ENCODE measurements at regions of chr19 and their contacts with region 1.

Region 1: DNA sequence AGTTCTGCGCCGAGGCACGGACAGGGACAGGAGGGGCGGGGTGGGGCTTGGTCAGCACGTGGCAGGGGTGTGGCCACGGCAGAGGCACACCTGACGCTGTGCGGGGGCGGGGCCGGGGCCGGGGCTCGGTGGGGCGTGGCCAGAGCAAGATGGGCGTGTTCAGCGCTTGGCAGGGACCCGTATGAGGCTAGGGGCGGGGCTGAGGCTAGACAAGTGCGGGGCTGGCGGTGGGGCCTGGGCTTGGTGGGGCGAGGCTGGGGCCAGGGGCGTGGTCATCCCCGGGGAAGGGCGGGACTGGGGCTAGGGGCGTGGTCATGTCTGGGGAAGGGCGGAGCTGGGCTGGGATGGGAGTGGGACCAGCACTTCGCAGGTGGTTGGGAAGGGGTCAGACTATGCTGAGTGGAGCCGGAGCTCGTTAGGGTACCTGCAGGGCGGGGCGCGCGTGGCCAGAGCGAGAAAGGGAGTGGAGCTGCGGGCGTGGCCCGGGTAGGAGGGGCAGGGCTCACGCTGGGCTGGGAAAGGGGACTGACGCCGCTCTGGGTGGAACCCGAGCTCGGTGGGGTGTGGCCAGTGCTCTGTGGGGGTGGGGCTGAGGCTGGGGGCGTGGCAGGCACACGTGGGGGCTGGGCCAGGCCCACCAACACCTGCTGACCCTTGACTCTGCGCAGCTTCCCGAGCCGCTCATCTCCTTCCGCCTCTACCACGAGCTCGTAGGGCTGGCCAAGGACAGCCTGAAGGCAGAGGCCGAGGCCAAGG is 12.8 kb downstream of the POLR2E start:
- DNase-seq: peak; percentile 66 to 93 (median 85)
- ATAC-seq: peak; percentile 92
- H3K4me3 ChIP-seq: no peak overlapping the region
- H3K4me3 Mint-ChIP-seq: peak overlapping the region in 9 of 10 donors; percentile 34 to 97 (median 75)
- H3K27ac ChIP-seq: peak overlapping the region; percentile 66
- H3K27ac Mint-ChIP-seq: peak overlapping the region in 8 of 9 donors; percentile 54 to 100 (median 90)
- H3K4me1 ChIP-seq: peaks cover 40 to 44% of the 10 kb centered on the region in 2 donors
- H3K4me1 Mint-ChIP-seq: peaks cover 17 to 59% (median 46%) of the 10 kb centered on the region in 7 donors
- H3K27me3 ChIP-seq: no peaks in the 10 kb centered on the region
- H3K27me3 Mint-ChIP-seq: no peaks in the 10 kb centered on the region

Region 2: DNA sequence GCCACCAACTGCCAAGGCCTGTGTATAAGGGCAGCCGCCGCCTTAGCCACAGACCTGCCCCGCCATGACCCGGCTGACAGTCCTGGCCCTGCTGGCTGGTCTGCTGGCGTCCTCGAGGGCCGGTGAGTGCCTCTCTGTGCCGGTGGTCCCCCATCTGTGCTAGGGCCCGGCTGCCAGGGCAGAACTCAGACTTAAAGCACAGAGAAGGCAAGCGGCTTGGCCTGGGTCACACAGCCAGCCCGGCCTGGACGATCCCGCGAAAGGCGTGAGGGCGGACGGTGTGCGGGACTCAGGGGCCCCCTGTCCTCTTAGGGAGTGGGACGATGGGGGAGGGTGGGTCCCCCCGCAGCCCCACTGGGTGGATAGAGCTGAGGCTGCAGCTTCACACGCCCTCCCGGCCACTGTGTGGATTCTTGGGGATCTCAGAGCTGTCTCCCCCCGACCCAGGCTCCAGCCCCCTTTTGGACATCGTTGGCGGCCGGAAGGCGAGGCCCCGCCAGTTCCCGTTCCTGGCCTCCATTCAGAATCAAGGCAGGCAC is 254.5 kb before region 1 on chr19 and contains the start of gene AZU1:
- CTCF ChIA-PET with region 1: no interaction called
- POLR2A ChIA-PET with region 1: no interaction called
- intact Hi-C with region 1: no loop called
- DNase-seq: no peak
- ATAC-seq: peak; percentile 60
- H3K4me3 ChIP-seq: no peak within 1 kb of the TSS
- H3K4me3 Mint-ChIP-seq: no peak within 1 kb of the TSS
- H3K27ac ChIP-seq: no peak within 1 kb of the TSS
- H3K27ac Mint-ChIP-seq: no peak within 1 kb of the TSS
- H3K4me1 ChIP-seq: no peaks in the 10 kb centered on the region
- H3K4me1 Mint-ChIP-seq: peaks cover 0 to 7% (median 0%) of the 10 kb centered on the region in 7 donors
- H3K27me3 ChIP-seq: no peaks in the 10 kb centered on the region
- H3K27me3 Mint-ChIP-seq: peaks cover 8 to 23% (median 11%) of the 10 kb centered on the region in 5 donors
- total RNA-seq, gene AZU1: 0.64 to 4.1 TPM in 2 of 5 experiments, not detected in the others

Region 3: DNA sequence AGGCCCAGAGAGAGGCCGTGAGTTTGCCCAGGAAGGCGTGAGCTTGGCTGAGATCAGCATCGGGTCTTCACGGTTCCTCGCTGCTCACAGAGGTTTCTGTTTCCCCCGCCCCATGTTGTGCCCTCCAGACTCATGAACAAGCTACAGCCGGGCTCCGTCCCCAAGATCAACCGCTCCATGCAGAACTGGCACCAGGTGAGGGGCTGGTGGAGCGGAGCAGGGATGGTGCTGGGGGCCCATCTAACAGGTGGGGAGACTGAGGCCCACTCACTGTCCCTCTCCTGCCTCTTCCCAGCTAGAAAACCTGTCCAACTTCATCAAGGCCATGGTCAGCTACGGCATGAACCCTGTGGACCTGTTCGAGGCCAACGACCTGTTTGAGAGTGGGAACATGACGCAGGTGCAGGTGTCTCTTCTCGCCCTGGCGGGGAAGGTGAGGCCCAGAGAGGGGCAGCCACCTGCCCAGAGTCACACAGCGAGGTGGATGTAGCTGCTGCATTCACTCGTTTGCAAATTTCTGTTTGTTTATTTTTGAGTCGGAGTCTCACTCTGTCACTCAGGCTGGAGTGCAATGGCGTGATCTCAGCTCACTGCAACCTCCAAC is 50.0 kb before region 1 on chr19:
- CTCF ChIA-PET with region 1: interaction called, 12 read pairs
- POLR2A ChIA-PET with region 1: interaction called, 495 read pairs
- intact Hi-C with region 1: loop called in 1 of 2 experiments (anchors 5 kb)
- DNase-seq: no peak
- ATAC-seq: no peak
- H3K4me3 ChIP-seq: no peak overlapping the region
- H3K4me3 Mint-ChIP-seq: peak overlapping the region in 5 of 10 donors; percentile 29 to 73 (median 48)
- H3K27ac ChIP-seq: peak overlapping the region; percentile 35
- H3K27ac Mint-ChIP-seq: peak overlapping the region in 7 of 9 donors; percentile 17 to 96 (median 80)
- H3K4me1 ChIP-seq: peaks cover 30 to 34% of the 10 kb centered on the region in 2 donors
- H3K4me1 Mint-ChIP-seq: peaks cover 13 to 60% (median 41%) of the 10 kb centered on the region in 7 donors
- H3K27me3 ChIP-seq: no peaks in the 10 kb centered on the region
- H3K27me3 Mint-ChIP-seq: no peaks in the 10 kb centered on the region